ENCODE measurements at regions of chr4 and their contacts with region 1.

Region 1: DNA sequence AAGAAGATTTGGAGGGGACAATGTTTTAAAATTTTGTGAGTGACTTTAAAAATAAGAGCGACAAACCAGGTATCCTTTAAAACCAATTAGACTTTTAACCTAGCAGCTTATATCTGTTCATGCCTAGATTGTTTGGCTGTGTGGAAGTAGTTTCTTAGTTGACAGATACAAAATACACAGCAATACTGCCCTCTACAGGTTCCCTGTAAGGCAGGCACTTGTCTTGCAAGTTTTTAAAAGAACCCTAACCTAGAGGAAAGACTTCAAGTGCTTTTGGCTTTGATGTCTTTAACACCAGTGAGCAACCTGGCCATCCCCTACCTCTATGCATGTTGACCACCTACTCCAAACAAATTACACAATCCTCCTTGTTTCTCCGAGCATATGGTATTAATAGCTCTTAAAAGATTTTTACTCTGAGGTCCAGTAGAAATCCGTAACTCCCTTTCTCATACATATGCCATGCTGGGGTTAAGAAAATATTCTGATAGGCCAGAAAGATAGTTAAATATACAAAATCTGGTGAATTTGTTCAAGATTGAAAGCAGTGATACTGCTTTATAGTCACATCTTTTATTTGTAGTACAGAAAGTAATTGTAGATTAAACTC is 273.0 kb downstream of the ARHGAP24 start:
- DNase-seq: peak; percentile 44
- H3K4me3 ChIP-seq: peak overlapping the region in 1 of 2 experiments; percentile 30; a peak in 1 of 4 replicates
- H3K27ac ChIP-seq: peak overlapping the region in 1 of 2 experiments; percentile 65; a peak in 2 of 4 replicates
- H3K4me1 ChIP-seq: peaks cover 0 to 6% of the 10 kb centered on the region in 2 experiments; a peak in 1 of 4 replicates
- H3K27me3 ChIP-seq: no peaks in the 10 kb centered on the region
- CTCF ChIP-seq: peak; percentile 97
- EP300 ChIP-seq: no peak
- RAD21 ChIP-seq: peak; percentile 96

Region 2: GRCh38 chr4:85084380-85085094 is 663.5 kb before region 1 on chr4:
- CTCF ChIA-PET with region 1: interaction called, 30 read pairs
- POLR2A ChIA-PET with region 1: no interaction called
- DNase-seq: peak; percentile 20
- H3K4me3 ChIP-seq: no peak overlapping the region
- H3K27ac ChIP-seq: no peak overlapping the region
- H3K4me1 ChIP-seq: no peaks in the 10 kb centered on the region
- H3K27me3 ChIP-seq: no peaks in the 10 kb centered on the region
- CTCF ChIP-seq: peak; percentile 82
- EP300 ChIP-seq: no peak
- RAD21 ChIP-seq: peak; percentile 78

Region 3: GRCh38 chr4:85147439-85148076 is 600.4 kb before region 1 on chr4:
- CTCF ChIA-PET with region 1: interaction called, 116 read pairs
- POLR2A ChIA-PET with region 1: no interaction called
- DNase-seq: peak; percentile 52
- H3K4me3 ChIP-seq: no peak overlapping the region
- H3K27ac ChIP-seq: no peak overlapping the region
- H3K4me1 ChIP-seq: no peaks in the 10 kb centered on the region; a peak in 1 of 4 replicates
- H3K27me3 ChIP-seq: no peaks in the 10 kb centered on the region
- CTCF ChIP-seq: peak; percentile 76
- EP300 ChIP-seq: no peak
- RAD21 ChIP-seq: peak; percentile 82

Region 4: DNA sequence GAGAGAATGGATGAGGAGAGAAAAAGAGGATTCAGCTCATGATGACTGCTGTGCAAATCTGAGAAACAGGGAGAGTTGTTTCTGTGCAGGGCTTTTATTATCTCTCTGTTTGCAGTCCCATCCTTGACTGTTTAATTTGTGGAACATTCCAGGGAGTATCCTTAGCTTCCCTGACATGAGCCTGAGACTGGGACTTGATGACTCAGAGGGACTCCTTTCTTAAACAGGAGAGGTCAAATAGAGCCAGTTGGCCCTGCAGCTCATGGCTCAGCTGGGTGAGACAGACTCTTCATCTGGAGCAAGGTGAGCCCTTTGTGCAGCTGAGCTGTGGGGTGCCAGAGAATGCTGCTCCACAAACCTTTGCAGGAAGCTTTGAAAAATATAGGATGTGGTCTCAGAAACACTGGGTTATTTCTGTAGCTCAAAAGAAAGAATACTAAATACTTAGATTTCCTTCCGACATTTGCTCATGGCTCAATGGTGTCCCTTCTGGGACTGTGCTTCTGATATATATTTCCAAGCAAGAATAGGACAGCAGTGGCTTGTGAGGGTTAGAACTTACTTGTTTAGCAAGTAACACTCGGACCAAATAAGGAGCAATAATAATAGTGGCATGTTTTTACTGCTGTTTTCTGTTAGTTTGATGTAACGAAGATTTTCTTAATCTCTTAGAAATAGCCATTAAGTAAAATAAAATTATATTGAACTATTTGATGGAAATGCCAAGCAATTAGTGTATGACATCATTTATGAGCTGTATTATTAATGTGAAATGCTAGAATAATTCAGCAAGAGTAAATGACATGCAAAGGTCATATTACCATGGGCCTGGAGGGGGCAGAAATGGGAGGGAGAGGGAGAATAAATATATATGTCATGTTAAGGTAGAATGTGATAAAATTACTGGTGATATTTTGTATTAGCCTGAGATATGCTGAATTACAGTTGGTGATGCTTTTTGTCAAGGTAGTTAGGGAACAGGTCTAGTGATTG is 258.4 kb before region 1 on chr4:
- CTCF ChIA-PET with region 1: interaction called, 11 read pairs
- POLR2A ChIA-PET with region 1: no interaction called
- DNase-seq: no peak
- H3K4me3 ChIP-seq: no peak overlapping the region
- H3K27ac ChIP-seq: no peak overlapping the region
- H3K4me1 ChIP-seq: peaks cover 0 to 6% of the 10 kb centered on the region in 2 experiments; a peak in 1 of 4 replicates
- H3K27me3 ChIP-seq: no peaks in the 10 kb centered on the region
- CTCF ChIP-seq: no peak
- EP300 ChIP-seq: no peak
- RAD21 ChIP-seq: no peak

Region 5: GRCh38 chr4:85548116-85548515 is 199.9 kb before region 1 on chr4:
- CTCF ChIA-PET with region 1: interaction called, 13 read pairs
- POLR2A ChIA-PET with region 1: no interaction called
- DNase-seq: peak; percentile 6
- H3K4me3 ChIP-seq: no peak overlapping the region
- H3K27ac ChIP-seq: no peak overlapping the region
- H3K4me1 ChIP-seq: no peaks in the 10 kb centered on the region
- H3K27me3 ChIP-seq: no peaks in the 10 kb centered on the region
- CTCF ChIP-seq: no peak
- EP300 ChIP-seq: no peak
- RAD21 ChIP-seq: peak; percentile 43

Region 6: GRCh38 chr4:85734424-85734831 is 13.6 kb before region 1 on chr4:
- CTCF ChIA-PET with region 1: interaction called, 24 read pairs
- POLR2A ChIA-PET with region 1: no interaction called
- DNase-seq: no peak
- H3K4me3 ChIP-seq: no peak overlapping the region
- H3K27ac ChIP-seq: no peak overlapping the region
- H3K4me1 ChIP-seq: peaks cover 0 to 7% of the 10 kb centered on the region in 2 experiments; a peak in 1 of 4 replicates
- H3K27me3 ChIP-seq: no peaks in the 10 kb centered on the region
- CTCF ChIP-seq: no peak
- EP300 ChIP-seq: peak in 1 of 2 experiments; percentile 86; a peak in 2 of 4 replicates
- RAD21 ChIP-seq: no peak

Region 7: DNA sequence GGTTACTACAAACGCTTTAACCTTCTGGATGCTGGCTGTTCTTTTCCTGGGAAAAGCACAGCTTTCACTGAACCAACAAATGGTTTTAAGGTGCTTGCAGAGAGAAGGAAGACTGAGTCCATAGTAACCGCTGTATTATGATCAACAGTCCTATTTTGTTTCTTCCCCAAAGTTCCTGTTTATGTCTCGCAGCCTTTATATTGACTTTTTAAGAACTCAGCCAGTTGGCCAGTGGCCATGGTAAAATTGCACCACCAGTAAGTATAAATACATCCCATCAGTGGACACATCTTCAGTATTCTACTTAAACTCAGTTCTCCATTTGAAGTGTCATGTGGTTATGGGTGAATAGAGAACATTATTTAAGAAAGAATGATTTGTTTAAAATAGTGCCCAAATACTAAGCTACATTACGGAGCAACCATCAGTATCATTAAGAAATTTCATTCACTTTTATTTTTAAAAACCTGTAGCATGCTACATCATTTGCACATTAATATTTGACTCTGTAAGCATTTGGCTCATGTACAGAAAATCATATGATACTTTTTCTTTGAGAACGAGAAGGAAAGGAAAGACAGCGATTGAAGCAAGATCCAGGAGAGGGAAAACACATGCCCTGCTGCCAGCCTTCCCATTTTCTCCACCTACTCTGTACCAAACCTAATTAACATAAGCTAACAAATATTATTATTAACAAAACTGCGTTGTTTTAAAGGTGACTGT is 14.0 kb after region 1 on chr4:
- CTCF ChIA-PET with region 1: interaction called, 21 read pairs
- POLR2A ChIA-PET with region 1: no interaction called
- DNase-seq: no peak
- H3K4me3 ChIP-seq: no peak overlapping the region; a peak in 1 of 4 replicates
- H3K27ac ChIP-seq: peak overlapping the region; percentile 3 to 88; a peak in 3 of 4 replicates
- H3K4me1 ChIP-seq: peaks cover 6 to 8% of the 10 kb centered on the region in 2 experiments
- H3K27me3 ChIP-seq: no peaks in the 10 kb centered on the region
- CTCF ChIP-seq: no peak
- EP300 ChIP-seq: no peak
- RAD21 ChIP-seq: no peak

Measured in SK-N-SH (cell line).